ENCODE measurements at regions of chr5 and their contacts with region 1.

Region 1: DNA sequence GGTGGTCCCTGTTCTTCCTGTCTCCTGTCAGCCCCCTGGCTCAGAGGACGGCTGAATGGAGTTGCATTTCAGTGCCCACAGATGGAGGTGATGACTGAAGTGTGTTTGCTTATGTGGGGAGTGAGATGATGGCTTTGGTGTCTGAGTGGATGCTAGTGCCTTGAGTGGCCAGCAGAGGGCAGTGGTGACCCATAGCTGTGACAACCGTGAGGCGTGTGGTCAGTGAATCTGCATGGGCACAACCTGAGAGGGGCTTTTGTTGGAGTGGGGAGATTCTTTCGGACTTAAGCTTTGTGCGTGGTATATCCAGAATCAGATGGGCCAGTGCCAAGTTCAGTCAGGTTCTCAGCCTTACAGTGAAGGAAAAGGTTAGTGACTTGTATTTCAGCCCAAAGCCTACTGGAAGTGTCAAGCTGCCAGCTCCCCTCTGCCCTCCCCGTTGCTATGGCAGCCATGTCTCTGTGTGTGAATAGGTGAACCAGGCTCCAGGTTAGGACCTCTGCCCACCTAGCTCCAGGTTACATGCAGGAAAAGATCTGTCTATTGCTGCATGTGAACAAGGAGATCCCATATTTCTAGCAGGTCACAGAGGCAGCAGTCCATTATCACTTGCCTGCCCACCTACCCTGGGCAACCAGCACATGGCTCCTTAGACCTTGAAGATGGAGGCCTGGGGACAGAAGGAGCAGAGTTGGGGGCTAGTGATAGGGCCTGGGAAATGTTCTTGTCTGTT is 14.7 kb upstream of the CXXC5 start:
- DNase-seq: peak; percentile 77
- H3K4me3 Mint-ChIP-seq: no peak overlapping the region
- H3K27ac Mint-ChIP-seq: peak overlapping the region; percentile 1
- H3K4me1 Mint-ChIP-seq: peaks cover 46% of the 10 kb centered on the region
- H3K27me3 Mint-ChIP-seq: no peaks in the 10 kb centered on the region

Region 2: DNA sequence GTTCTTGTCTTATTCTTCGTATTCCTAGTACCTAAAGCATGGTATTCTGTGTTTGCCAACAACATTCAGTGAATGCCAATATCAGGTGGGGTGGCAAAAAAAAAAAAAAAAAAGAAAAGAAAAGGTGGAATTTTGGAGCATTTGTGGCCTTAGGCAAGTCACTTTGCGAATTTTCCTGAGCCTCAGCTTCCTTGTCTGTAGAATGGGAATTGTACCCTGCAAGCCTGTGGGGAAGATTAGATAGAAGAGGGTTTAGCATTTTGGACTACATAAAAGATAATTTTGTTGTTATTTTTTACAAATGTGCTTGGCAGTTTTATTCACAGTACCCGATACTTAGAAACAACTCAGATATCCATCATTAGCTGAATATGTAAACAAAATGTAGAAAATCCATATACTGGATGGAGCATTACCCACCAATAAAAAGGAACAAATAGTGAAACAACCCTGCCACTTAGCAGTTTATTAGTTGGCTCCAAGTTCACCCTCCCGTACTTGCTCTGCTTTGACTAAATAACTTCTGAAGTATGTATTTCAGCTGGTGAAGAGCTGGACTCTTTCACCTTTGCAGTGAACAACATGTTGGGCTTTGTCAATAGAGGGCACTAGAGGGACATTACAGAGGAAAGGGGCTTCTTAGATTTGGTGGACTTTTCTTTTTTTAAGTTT is 58.7 kb before region 1 on chr5:
- CTCF ChIA-PET with region 1: interaction called, 15 read pairs
- DNase-seq: no peak
- H3K4me3 Mint-ChIP-seq: no peak overlapping the region
- H3K27ac Mint-ChIP-seq: peak overlapping the region; percentile 95
- H3K4me1 Mint-ChIP-seq: peaks cover 78% of the 10 kb centered on the region
- H3K27me3 Mint-ChIP-seq: no peaks in the 10 kb centered on the region

Region 3: GRCh38 chr5:139651853-139652787 is 18.7 kb after region 1 on chr5:
- CTCF ChIA-PET with region 1: interaction called, 23 read pairs
- DNase-seq: peak; percentile 72
- H3K4me3 Mint-ChIP-seq: no peak overlapping the region
- H3K27ac Mint-ChIP-seq: no peak overlapping the region
- H3K4me1 Mint-ChIP-seq: peaks cover 34% of the 10 kb centered on the region
- H3K27me3 Mint-ChIP-seq: peaks cover 89% of the 10 kb centered on the region

Region 4: DNA sequence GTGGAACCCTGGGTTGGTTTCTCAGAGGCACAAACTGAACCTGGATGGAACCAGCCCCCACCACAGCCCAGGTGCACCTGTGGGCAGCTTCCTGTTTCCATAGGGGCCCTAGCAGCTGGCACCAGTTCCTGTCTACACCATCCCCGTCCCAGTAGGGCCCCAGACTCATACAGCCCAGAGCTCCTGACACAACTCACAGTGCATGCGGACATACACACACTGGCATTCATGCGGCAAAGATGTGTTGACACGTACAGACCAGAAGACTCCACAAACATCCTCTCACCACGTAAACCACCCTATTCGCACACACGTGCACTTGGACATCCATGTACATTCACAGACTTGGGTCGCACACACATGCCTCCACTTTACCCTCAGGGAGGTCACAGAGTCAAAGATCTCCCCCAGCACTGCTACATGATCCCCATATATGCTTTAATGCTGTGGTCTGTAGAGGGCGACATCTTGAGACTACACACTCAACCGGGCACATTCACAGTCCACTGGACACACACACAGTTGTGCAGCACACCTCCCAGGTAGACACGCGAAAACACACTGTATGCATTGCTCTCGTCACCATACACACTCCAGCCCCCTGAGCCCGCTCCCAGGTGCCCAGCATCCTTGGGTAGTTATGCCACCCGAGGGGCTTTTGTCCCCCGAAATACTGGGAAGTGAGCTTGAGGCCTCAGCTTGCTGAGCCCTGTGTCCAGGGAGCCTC is 37.1 kb after region 1 on chr5:
- CTCF ChIA-PET with region 1: interaction called, 31 read pairs
- DNase-seq: peak; percentile 51
- H3K4me3 Mint-ChIP-seq: no peak overlapping the region
- H3K27ac Mint-ChIP-seq: peak overlapping the region; percentile 76
- H3K4me1 Mint-ChIP-seq: peaks cover 40% of the 10 kb centered on the region
- H3K27me3 Mint-ChIP-seq: peaks cover 46% of the 10 kb centered on the region

Region 5: DNA sequence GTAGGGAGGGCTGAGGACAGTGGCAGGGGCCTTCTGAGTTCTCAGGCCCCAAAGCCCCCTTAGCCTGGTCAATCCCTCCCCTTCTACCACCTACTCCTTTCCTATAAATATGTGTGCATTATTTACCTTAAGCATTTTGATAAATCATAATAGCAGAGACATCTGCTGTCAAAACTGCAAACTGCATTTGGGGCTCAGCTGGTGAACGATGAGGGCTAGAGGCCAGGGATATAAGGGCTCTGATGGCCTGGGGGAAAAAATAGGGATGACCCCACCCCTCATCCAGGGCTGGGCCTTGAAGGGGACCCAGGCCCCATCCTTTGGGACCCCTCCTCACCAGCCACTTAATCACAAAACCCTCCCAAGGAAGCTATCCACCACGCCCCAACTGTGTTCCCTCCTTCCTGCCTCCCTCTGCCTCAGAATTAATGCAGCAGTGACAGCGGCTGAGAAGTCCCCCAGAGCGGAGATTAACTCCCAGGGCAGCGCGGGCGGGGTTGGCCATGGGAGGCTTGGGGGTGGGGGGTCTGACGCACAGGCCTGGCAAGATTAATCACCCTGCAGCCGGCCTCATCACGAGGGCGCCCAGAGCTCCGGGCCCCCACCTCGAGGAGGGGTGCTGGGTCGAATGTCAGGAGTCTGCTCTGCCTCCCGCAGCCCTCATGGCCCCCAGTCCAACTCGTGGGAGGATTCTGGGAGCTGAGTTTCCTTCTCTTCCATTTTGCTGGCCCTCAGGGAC is 56.8 kb after region 1 on chr5:
- CTCF ChIA-PET with region 1: interaction called, 113 read pairs
- DNase-seq: peak; percentile 48
- H3K4me3 Mint-ChIP-seq: no peak overlapping the region
- H3K27ac Mint-ChIP-seq: no peak overlapping the region
- H3K4me1 Mint-ChIP-seq: no peaks in the 10 kb centered on the region
- H3K27me3 Mint-ChIP-seq: peaks cover 57% of the 10 kb centered on the region

Region 6: DNA sequence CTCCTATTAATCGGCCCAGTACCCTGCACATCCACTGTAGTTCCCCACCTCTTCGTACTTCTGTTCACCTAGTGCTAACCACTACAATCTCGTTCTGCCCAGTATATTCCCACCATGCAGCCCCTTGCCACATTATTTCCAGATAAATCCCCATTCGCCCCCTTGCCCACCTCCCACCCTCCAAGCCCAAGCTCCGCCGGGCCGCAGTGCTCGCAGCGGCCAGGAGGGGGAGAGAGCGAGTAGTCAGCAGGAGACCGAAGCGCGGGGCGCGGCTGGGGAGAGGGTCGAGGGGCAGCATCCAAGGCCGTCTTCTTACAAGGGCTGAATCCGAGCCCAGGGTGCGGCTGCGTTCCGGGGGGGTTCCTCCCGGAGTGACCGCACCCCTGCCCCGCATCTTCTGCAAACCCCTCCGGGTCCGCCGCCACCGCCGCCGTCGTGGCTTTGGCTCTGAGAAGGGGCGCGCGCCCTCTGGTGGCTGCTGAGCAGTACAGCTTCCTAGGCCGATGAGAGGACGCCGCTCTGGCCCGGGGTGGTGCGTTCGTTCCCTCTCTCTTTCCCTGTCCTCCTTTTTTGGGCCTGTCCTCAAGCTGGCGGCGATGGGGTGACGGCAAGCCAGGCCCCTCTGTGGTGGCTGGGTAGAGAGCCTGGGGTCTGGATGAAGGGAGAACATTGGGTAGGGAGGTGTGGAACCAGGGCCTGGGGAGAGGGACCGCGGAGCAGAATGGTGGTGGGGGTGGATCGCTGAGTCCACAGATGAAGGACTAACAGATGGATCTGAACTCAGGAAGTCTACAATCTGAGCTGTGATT is 132.2 kb after region 1 on chr5:
- CTCF ChIA-PET with region 1: interaction called, 91 read pairs
- DNase-seq: peak; percentile 85
- H3K4me3 Mint-ChIP-seq: peak overlapping the region; percentile 63
- H3K27ac Mint-ChIP-seq: no peak overlapping the region
- H3K4me1 Mint-ChIP-seq: peaks cover 8% of the 10 kb centered on the region
- H3K27me3 Mint-ChIP-seq: peaks cover 81% of the 10 kb centered on the region